ENCODE measurements at regions of chr6 and their contacts with region 1.

Region 1: GRCh38 chr6:28586962-28587745 is 61.5 kb downstream of the GPX5 start:
- DNase-seq: peak; percentile 84
- H3K4me3 Mint-ChIP-seq: peak overlapping the region; percentile 91
- H3K27ac Mint-ChIP-seq: peak overlapping the region; percentile 89
- H3K4me1 Mint-ChIP-seq: peaks cover 39% of the 10 kb centered on the region
- H3K27me3 Mint-ChIP-seq: no peaks in the 10 kb centered on the region
- CTCF ChIP-seq: no peak

Region 2: GRCh38 chr6:28252009-28252975 is 334.9 kb before region 1 on chr6 and contains the start of gene ZKSCAN4:
- CTCF ChIA-PET with region 1: no interaction called
- intact Hi-C with region 1: loop called (anchors 10 kb)
- DNase-seq: peak; percentile 84
- H3K4me3 Mint-ChIP-seq: peak within 1 kb of the TSS; percentile 100
- H3K27ac Mint-ChIP-seq: peak within 1 kb of the TSS; percentile 64
- H3K4me1 Mint-ChIP-seq: peaks cover 10% of the 10 kb centered on the region
- H3K27me3 Mint-ChIP-seq: no peaks in the 10 kb centered on the region
- CTCF ChIP-seq: no peak
- total RNA-seq, gene ZKSCAN4: 6.1 and 6.7 TPM in 2 replicates

Region 3: GRCh38 chr6:28282926-28283325 is 304.2 kb before region 1 on chr6:
- CTCF ChIA-PET with region 1: no interaction called
- intact Hi-C with region 1: no loop called
- DNase-seq: no peak
- H3K4me3 Mint-ChIP-seq: no peak overlapping the region
- H3K27ac Mint-ChIP-seq: no peak overlapping the region
- H3K4me1 Mint-ChIP-seq: peaks cover 10% of the 10 kb centered on the region
- H3K27me3 Mint-ChIP-seq: no peaks in the 10 kb centered on the region
- CTCF ChIP-seq: no peak

Region 4: DNA sequence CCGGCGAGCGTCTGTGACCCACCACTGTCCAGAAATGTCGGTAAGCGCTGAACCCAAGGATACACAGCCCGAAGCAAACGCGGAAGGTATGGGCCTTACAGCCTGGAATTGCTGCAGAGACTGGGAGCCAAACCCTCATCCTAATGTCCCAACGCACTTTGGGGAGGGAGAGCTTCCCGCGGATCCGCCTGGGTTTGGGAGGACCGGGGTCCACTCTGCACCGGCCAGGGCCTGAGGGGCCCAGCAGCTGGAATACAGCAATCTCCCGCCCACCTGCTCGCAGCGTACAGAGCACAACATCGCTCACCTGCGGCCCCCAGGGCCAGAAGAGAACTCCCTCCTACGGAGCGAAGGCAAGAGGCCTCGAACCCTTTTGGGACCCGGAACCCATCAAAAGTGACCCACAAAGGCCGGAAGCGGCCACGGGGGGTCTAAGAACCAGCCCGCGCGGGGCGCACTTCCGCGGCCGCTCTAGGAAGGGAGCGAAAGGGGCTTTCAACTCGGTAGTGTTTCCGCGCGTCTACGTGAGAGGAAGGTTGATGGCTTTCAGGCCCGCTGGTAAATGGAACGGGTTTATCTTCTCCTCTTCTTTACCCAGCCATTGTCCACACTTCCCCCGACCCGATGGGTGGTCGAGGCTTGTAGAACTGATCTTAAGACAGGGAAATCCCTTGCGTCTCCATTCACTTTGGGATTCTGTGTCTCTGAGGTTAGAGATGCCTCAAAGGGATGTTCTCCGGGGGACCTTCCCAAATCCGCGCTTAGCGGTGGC is 187.6 kb before region 1 on chr6 and contains the start of gene ZSCAN12:
- CTCF ChIA-PET with region 1: no interaction called
- intact Hi-C with region 1: loop called (anchors 5 kb)
- DNase-seq: peak; percentile 64
- H3K4me3 Mint-ChIP-seq: peak within 1 kb of the TSS; percentile 73
- H3K27ac Mint-ChIP-seq: peak within 1 kb of the TSS; percentile 25
- H3K4me1 Mint-ChIP-seq: peaks cover 23% of the 10 kb centered on the region
- H3K27me3 Mint-ChIP-seq: no peaks in the 10 kb centered on the region
- CTCF ChIP-seq: no peak
- total RNA-seq, gene ZSCAN12: 4.7 and 5.2 TPM in 2 replicates

Region 5: GRCh38 chr6:28474441-28475219 is 112.5 kb before region 1 on chr6:
- CTCF ChIA-PET with region 1: no interaction called
- intact Hi-C with region 1: no loop called
- DNase-seq: peak; percentile 47
- H3K4me3 Mint-ChIP-seq: peak overlapping the region; percentile 31
- H3K27ac Mint-ChIP-seq: peak overlapping the region; percentile 78
- H3K4me1 Mint-ChIP-seq: no peaks in the 10 kb centered on the region
- H3K27me3 Mint-ChIP-seq: peaks cover 22% of the 10 kb centered on the region
- CTCF ChIP-seq: no peak

Region 6: DNA sequence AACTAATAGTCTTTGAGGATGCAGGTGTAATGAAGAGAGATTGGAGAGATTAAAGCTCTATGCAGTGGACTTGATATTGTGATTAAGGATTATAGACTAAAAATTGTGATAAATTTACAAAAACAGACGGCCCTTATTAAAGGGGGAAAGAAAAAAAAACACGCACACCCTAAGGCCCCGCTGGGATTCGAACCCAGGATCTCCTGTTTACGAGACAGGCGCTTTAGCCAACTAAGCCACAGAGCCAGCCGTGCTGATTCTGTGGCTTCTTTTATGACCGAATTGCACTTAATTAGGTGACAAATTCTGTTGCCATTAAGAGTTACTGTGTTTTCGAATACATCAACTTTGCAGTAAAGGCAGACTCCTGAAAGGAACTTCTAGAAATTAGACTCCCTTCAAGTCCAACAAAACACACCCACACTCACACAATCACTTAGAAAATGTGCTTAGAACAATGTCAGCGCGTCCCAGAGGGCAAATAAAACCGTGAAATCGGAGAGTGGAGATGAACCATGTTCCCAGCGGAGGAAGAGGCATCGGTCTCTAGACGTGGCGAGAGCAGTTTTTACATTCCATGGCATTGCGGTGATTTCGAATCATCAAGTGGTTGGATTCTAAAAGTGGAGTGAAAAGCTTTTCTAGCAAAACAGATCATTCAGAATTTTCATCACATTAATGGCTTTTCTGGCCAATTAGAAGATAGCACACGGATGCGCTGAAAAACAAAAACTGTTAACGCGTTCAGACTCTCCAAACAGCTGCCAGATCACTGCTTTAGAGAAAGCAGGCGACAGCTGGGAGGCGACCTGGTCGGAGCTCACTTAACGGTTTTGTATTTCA is 61.1 kb after region 1 on chr6:
- CTCF ChIA-PET with region 1: interaction called, 3 read pairs
- intact Hi-C with region 1: loop called (anchors 5 kb)
- DNase-seq: peak; percentile 87
- H3K4me3 Mint-ChIP-seq: peak overlapping the region; percentile 91
- H3K27ac Mint-ChIP-seq: peak overlapping the region; percentile 85
- H3K4me1 Mint-ChIP-seq: no peaks in the 10 kb centered on the region
- H3K27me3 Mint-ChIP-seq: peaks cover 16% of the 10 kb centered on the region
- CTCF ChIP-seq: no peak